SK-N-SH (cell line): ENCODE measurements at regions of chr15 and their contacts with region 1.

Region 1: GRCh38 chr15:73273181-73274002 is 95.4 kb downstream of the HCN4 start:
- DNase-seq: peak; percentile 71
- H3K4me3 ChIP-seq: peak overlapping the region in 1 of 2 experiments; percentile 7; a peak in 1 of 4 replicates
- H3K27ac ChIP-seq: no peak overlapping the region
- H3K4me1 ChIP-seq: no peaks in the 10 kb centered on the region; a peak in 1 of 4 replicates
- H3K27me3 ChIP-seq: no peaks in the 10 kb centered on the region
- CTCF ChIP-seq: peak; percentile 87
- EP300 ChIP-seq: no peak
- RAD21 ChIP-seq: peak; percentile 85

Region 2: GRCh38 chr15:72796515-72797337 is 476.7 kb before region 1 on chr15:
- CTCF ChIA-PET with region 1: interaction called, 21 read pairs
- POLR2A ChIA-PET with region 1: no interaction called
- DNase-seq: peak; percentile 93
- H3K4me3 ChIP-seq: peak overlapping the region; percentile 54 to 70
- H3K27ac ChIP-seq: no peak overlapping the region
- H3K4me1 ChIP-seq: peaks cover 0 to 6% of the 10 kb centered on the region in 2 experiments; a peak in 1 of 4 replicates
- H3K27me3 ChIP-seq: peaks cover 4% of the 10 kb centered on the region; the same call in 1 of the 2 replicates
- CTCF ChIP-seq: peak; percentile 64
- EP300 ChIP-seq: no peak
- RAD21 ChIP-seq: peak; percentile 71

Region 3: GRCh38 chr15:73249499-73249898 is 23.9 kb before region 1 on chr15:
- CTCF ChIA-PET with region 1: interaction called, 124 read pairs
- POLR2A ChIA-PET with region 1: no interaction called
- DNase-seq: no peak
- H3K4me3 ChIP-seq: no peak overlapping the region
- H3K27ac ChIP-seq: no peak overlapping the region
- H3K4me1 ChIP-seq: no peaks in the 10 kb centered on the region
- H3K27me3 ChIP-seq: no peaks in the 10 kb centered on the region
- CTCF ChIP-seq: no peak
- EP300 ChIP-seq: no peak
- RAD21 ChIP-seq: no peak

Region 4: DNA sequence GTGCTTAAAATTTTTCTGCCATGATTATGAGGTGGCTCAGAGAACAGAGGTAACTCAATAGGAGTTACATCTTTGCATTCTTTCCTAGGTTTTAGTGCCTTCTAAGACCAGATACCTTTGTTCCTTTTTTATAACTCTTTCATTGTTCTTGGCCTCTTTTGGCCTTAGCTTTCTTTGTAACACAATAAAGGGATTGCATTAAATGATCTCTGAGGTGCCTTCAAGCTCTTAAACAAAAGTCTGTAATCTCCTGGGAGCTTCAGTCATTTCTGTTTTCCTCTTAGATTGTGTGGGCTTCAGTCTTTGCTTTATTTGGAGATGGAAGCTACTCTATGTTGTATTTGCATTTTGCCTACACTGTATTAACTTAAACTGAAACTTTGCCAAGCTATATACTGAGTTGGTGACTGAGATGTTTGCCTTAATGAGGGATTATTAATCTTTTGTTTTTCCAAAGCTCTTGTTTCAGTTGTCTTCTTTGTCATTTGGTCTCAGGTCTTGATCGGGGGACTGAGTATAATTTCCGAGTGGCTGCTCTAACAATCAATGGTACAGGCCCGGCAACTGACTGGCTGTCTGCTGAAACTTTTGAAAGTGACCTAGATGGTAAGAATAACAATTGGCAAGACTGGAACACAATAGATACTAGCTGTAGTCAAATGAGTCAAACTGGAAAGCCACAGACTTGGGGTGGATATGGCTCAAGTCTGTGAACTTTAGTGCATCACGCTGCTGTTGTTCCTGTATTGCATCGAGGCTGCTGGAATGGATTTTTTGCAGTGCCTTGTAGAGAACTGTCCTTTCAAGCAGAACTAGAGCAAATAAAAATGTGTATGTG is 14.9 kb before region 1 on chr15:
- CTCF ChIA-PET with region 1: interaction called, 99 read pairs
- POLR2A ChIA-PET with region 1: no interaction called
- DNase-seq: no peak
- H3K4me3 ChIP-seq: no peak overlapping the region
- H3K27ac ChIP-seq: no peak overlapping the region
- H3K4me1 ChIP-seq: no peaks in the 10 kb centered on the region
- H3K27me3 ChIP-seq: no peaks in the 10 kb centered on the region
- CTCF ChIP-seq: no peak
- EP300 ChIP-seq: no peak
- RAD21 ChIP-seq: no peak

Region 5: DNA sequence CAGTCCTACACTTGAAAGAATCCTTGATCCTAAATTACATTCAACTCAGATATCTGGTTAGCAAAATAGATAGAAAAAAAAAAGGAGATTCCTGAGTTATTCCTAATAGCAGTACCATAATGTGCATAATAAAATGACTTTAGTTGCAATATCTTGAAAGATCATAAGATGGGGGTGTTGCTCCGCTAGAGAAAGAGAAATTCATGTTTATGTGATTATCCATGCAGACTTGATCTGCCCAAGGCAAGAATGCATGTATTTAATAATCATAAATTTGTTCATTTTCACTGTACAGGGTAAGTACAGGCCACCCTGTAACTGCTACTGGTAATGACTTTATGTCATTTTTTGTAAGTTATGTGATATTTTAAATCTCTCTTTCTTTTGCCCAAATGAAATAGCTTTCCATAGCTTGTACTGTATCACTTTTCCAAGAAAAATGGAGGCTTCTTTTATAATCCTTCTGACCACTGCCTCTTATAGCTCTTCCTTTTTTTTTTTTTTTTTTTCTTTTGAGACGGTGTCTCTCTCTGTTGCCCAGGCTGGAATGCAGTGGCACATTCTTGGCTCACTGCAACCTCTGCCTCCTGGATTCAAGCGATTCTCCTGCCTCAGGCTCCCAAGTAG is 10.8 kb after region 1 on chr15:
- CTCF ChIA-PET with region 1: interaction called, 72 read pairs
- POLR2A ChIA-PET with region 1: no interaction called
- DNase-seq: peak; percentile 56
- H3K4me3 ChIP-seq: no peak overlapping the region
- H3K27ac ChIP-seq: peak overlapping the region; percentile 26 to 37; a peak in 3 of 4 replicates
- H3K4me1 ChIP-seq: peaks cover 5 to 11% of the 10 kb centered on the region in 2 experiments
- H3K27me3 ChIP-seq: no peaks in the 10 kb centered on the region
- CTCF ChIP-seq: peak; percentile 65
- EP300 ChIP-seq: peak in 1 of 2 experiments; percentile 39; a peak in 1 of 4 replicates
- RAD21 ChIP-seq: peak; percentile 80